Activated B cell treated with CpG ODN at 0.5 μM for 24 hours (primary cell): ENCODE measurements at regions of chr2 and their contacts with region 1.

Region 1: DNA sequence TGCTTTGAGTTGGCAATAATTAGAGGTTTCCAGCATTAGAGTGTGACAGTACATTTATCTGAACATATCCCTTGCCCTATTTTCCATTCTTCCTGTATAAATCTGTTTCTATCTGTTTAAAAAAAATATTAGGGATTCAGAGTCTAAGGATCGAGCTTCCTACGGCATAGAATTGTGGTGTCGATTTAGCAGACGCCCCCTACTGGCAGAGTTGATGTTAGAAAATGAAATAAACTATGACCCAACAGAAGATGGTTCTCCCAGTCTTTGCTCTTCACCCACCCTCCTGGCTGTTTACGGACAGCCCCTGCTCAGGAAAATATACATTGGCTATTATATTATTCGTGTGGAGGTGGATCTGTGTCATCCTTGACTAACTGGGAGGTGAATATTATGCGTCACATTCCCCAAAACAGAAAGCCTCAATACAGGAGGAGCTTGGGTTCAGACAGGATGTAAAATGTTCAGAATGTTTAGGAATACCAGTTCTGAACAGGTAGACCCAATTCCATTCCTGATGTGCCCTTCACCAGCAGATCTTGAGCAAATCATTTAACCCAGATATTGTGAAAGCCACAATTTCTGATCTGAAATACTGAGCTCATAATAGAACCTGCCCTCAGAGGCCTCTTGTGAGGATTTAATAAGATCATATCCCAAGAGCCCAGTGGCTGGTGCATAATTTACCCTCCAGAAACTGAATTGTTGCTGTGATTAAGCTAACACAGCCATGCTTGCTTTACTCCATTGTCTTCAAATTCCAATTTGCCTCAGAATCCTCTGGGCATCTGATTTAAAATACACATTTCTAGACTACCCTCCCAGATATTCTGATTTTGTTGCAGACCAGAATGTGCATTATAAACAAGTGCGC is 10.8 kb upstream of the ERMN start:
- DNase-seq: no peak
- ATAC-seq: peak; percentile 56
- H3K4me3 Mint-ChIP-seq: peak overlapping the region; percentile 11
- H3K27ac Mint-ChIP-seq: no peak overlapping the region
- H3K4me1 Mint-ChIP-seq: peaks cover 6% of the 10 kb centered on the region
- H3K27me3 Mint-ChIP-seq: no peaks in the 10 kb centered on the region
- CTCF ChIP-seq: peak; percentile 80

Region 2: GRCh38 chr2:156874707-156875106 is 461.7 kb before region 1 on chr2:
- CTCF ChIA-PET with region 1: no interaction called
- POLR2A ChIA-PET with region 1: no interaction called
- intact Hi-C with region 1: no loop called
- DNase-seq: no peak
- ATAC-seq: no peak
- H3K4me3 Mint-ChIP-seq: no peak overlapping the region
- H3K27ac Mint-ChIP-seq: no peak overlapping the region
- H3K4me1 Mint-ChIP-seq: no peaks in the 10 kb centered on the region
- H3K27me3 Mint-ChIP-seq: no peaks in the 10 kb centered on the region
- CTCF ChIP-seq: no peak

Region 3: GRCh38 chr2:157355618-157356017 is 19.2 kb after region 1 on chr2:
- CTCF ChIA-PET with region 1: interaction called, 62 read pairs
- POLR2A ChIA-PET with region 1: no interaction called
- intact Hi-C with region 1: no loop called
- DNase-seq: no peak
- ATAC-seq: no peak
- H3K4me3 Mint-ChIP-seq: no peak overlapping the region
- H3K27ac Mint-ChIP-seq: no peak overlapping the region
- H3K4me1 Mint-ChIP-seq: peaks cover 11% of the 10 kb centered on the region
- H3K27me3 Mint-ChIP-seq: no peaks in the 10 kb centered on the region
- CTCF ChIP-seq: no peak

Region 4: GRCh38 chr2:157363612-157364101 is 27.3 kb after region 1 on chr2:
- CTCF ChIA-PET with region 1: interaction called, 12 read pairs
- POLR2A ChIA-PET with region 1: no interaction called
- intact Hi-C with region 1: no loop called
- DNase-seq: no peak
- ATAC-seq: peak; percentile 52
- H3K4me3 Mint-ChIP-seq: peak overlapping the region; percentile 16
- H3K27ac Mint-ChIP-seq: peak overlapping the region; percentile 57
- H3K4me1 Mint-ChIP-seq: peaks cover 33% of the 10 kb centered on the region
- H3K27me3 Mint-ChIP-seq: no peaks in the 10 kb centered on the region
- CTCF ChIP-seq: no peak

Region 5: DNA sequence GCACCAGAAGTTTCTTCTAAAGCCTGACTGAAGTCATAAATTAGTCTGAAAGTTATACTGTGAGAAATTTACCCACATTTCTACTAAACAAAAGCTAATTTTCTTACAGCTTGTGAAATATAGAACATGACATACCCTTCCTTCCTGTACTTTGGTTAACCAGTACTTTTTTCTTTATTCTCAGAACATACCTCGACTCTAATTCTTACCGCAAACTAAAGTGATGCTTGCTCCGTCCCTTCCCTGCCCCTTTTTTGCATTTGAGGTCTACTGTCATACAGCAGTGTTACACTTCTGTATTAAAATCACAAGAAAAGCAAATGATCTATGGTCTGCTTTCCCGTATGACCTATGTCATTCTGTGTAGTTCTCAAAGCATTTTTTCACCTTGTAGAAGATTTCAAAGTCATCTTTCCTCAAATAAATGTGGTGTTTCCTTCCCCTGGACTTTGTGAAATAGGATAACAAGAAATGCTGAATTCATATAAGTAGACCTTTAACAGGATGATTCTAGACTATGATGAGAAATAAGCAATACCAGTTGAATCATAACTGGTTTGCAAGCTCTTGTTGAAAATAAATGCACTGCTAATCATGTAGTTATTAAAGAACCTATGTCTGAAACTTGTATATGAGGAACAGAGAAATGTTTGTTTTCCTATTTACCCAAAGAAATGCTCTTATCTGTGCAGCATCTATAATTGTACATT is 77.1 kb after region 1 on chr2:
- CTCF ChIA-PET with region 1: interaction called, 4 read pairs
- POLR2A ChIA-PET with region 1: interaction called, 8 read pairs
- intact Hi-C with region 1: loop called (anchors 2 kb)
- DNase-seq: no peak
- ATAC-seq: peak; percentile 80
- H3K4me3 Mint-ChIP-seq: peak overlapping the region; percentile 42
- H3K27ac Mint-ChIP-seq: peak overlapping the region; percentile 84
- H3K4me1 Mint-ChIP-seq: peaks cover 79% of the 10 kb centered on the region
- H3K27me3 Mint-ChIP-seq: no peaks in the 10 kb centered on the region
- CTCF ChIP-seq: no peak

Region 6: GRCh38 chr2:157433394-157433793 is 97.0 kb after region 1 on chr2:
- CTCF ChIA-PET with region 1: interaction called, 11 read pairs
- POLR2A ChIA-PET with region 1: no interaction called
- intact Hi-C with region 1: no loop called
- DNase-seq: no peak
- ATAC-seq: no peak
- H3K4me3 Mint-ChIP-seq: peak overlapping the region; percentile 57
- H3K27ac Mint-ChIP-seq: peak overlapping the region; percentile 61
- H3K4me1 Mint-ChIP-seq: peaks cover 86% of the 10 kb centered on the region
- H3K27me3 Mint-ChIP-seq: no peaks in the 10 kb centered on the region
- CTCF ChIP-seq: no peak

Region 7: DNA sequence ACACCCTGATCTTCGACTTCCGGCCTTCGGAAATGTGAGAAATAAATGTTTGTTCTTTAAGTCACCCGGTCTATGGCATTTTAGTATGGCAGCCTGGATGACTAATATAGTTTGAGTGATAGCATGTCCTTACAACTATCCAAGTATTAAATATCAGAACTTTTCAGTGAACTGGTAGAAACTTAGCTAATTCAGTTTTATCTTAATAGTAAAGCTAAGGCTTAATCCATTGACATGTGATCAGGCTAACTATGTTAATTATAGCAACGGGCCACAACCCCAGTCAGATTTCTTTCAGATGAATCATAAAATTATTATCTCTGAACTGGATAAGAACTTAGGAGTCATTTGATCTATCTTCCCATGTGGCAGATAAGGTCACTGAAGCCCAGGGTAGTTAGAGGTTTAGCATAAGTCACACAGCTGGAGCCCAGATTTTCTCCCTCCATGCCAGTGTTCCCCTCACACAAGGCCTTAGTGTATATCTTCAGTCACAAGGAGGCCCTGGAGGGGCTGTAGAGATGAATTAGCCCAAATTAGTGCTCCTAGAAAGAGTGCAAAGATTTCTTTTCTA is 724.6 kb after region 1 on chr2:
- CTCF ChIA-PET with region 1: no interaction called
- POLR2A ChIA-PET with region 1: no interaction called
- intact Hi-C with region 1: no loop called
- DNase-seq: no peak
- ATAC-seq: no peak
- H3K4me3 Mint-ChIP-seq: no peak overlapping the region
- H3K27ac Mint-ChIP-seq: no peak overlapping the region
- H3K4me1 Mint-ChIP-seq: no peaks in the 10 kb centered on the region
- H3K27me3 Mint-ChIP-seq: no peaks in the 10 kb centered on the region
- CTCF ChIP-seq: no peak